ENCODE measurements at regions of chr9 and their contacts with region 1.

Region 1: DNA sequence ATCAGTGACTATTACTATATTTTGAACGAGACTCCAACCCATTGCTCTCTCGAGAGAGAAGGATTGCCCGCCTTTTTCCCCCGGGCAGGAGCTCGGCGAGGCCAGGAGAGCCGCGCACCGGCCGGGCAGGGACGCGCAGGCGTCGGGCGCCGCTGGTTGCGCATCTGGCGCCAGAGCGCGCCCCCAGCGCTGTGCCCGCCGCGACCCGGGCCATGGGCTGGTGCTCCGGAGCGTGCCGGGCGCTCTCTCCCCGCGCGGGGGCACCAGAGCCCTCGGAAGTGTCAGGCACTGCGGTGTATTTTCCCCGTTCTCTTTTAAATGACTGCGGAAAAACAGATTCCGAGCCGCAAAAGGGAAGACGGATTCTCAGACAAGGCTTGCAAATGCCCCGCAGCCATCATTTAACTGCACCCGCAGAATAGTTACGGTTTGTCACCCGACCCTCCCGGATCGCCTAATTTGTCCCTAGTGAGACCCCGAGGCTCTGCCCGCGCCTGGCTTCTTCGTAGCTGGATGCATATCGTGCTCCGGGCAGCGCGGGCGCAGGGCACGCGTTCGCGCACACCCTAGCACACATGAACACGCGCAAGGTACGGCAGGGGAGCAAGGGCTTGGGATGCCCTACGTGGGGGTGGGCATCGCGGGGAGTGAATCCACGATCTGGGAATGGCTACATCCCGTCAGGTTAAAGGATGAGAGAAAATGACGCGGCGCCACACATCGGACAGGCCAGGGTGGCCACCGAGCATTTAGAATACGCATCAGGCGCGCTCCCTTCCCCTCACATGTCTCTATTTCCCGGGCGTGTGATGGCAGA is 1.1 kb upstream of the NTRK2 start:
- DNase-seq: peak; percentile 92
- H3K4me3 ChIP-seq: peak overlapping the region; percentile 49 to 64
- H3K27ac ChIP-seq: no peak overlapping the region
- H3K4me1 ChIP-seq: peaks cover 0 to 27% of the 10 kb centered on the region in 2 experiments; a peak in 1 of 4 replicates
- H3K27me3 ChIP-seq: peaks cover 19% of the 10 kb centered on the region
- CTCF ChIP-seq: peak; percentile 67
- EP300 ChIP-seq: no peak
- RAD21 ChIP-seq: peak; percentile 81

Region 2: DNA sequence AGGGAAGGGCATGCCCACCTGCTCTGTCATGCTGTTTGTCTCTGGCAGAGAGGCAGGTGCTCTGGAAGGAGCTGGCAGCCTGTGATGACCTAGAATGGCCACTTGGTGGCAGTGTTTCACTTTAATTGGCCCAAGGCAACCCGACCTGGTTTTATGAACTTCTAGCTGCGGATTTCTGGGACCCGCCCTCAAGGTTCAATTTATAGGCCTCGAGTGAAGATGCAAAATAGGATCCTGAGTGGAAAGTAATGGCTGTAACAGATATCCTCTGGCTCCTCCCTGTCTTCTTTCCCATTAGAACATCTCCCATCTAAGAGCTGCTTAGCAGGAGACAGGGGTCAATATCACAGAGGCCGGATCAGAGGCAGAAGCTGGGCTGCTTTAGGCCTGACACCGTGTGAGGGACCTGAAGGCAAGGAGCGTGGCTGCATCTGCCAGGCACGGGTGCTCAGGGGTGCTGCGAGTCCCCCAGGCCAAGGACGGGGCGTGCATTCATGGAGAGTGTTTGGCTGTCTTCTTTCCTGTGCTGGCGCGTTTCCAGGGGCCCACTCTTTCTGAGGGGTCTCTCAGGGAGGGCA is 271.2 kb before region 1 on chr9:
- CTCF ChIA-PET with region 1: interaction called, 27 read pairs
- POLR2A ChIA-PET with region 1: no interaction called
- DNase-seq: peak; percentile 82
- H3K4me3 ChIP-seq: peak overlapping the region in 1 of 2 experiments; percentile 13; a peak in 1 of 4 replicates
- H3K27ac ChIP-seq: no peak overlapping the region
- H3K4me1 ChIP-seq: peaks cover 0 to 3% of the 10 kb centered on the region in 2 experiments; a peak in 1 of 4 replicates
- H3K27me3 ChIP-seq: no peaks in the 10 kb centered on the region
- CTCF ChIP-seq: peak; percentile 88
- EP300 ChIP-seq: no peak
- RAD21 ChIP-seq: peak; percentile 98

Region 3: DNA sequence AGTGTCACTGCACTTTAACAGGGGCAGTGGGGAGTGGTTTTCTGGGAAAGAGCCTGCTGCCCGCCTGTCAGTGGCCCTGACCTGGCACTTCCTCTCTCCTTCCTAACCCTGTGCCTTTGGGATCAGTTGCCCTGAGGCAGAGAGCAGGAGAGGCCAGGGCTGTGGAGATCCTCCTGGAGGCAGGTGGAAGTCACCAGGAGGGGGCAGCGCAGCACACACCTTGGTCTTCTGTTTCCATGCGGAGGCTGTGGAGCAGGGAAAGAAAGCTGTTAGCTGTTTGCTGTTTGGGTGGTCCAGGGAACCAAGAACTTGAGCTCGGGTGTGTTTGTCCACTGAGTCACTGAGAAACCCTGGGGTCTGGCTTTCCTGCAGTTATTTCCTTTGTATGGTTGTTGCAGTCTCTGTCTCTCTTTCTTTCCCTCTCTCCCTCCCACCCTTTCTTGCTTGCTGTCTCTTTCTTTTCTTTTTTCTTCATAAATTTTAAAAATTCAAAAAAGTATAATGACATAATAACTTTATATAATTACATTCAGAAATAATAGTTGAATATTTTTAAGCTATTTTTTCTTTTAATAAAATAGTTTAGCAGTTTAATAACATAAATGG is 29.2 kb after region 1 on chr9:
- CTCF ChIA-PET with region 1: interaction called, 19 read pairs
- POLR2A ChIA-PET with region 1: no interaction called
- DNase-seq: peak; percentile 58
- H3K4me3 ChIP-seq: no peak overlapping the region
- H3K27ac ChIP-seq: no peak overlapping the region
- H3K4me1 ChIP-seq: no peaks in the 10 kb centered on the region
- H3K27me3 ChIP-seq: no peaks in the 10 kb centered on the region; the same call in 1 of the 2 replicates
- CTCF ChIP-seq: peak; percentile 68
- EP300 ChIP-seq: no peak
- RAD21 ChIP-seq: peak; percentile 74

Region 4: DNA sequence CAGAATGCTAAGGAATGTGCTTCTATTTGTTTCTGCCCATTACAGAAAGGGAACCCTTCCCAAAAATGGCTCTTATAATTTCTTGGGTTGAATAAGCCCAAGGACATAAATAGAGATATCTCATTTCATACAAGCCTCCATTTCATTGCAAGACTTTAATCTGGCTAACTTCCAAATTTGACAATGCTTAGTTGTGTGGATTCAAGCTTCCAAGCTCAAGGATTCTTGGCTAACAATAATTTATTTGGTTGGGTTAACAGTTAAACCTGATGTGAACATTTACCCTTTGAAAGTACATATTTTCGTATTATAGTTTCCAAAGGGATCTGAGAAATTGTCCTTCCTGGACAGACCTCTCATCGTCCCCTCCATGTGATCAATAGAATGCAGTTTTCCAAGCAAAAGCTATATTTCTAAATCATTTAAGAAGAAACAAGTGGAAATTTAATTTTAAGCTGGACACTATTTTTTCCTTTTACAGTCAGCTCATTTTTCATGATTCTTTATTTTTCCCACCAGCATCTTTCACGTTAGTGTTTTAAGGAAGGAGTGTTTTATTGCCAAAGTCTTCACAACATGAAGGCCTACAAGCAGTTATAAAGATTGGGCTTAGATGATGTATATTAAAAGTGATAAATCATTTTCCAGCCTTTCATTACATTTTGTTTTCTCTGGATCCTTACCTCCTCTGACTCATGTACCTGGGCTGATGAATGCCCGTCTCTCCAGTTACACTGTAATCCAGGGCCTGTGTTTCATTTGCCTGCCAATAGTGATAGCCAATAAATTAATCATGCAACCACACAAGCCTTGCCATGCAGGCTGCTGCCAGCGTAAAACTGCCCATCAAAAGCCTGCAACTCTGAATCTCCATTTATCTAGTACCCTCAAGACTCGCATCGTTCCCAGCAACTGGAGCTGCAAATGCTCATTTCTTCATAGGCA is 177.8 kb after region 1 on chr9:
- CTCF ChIA-PET with region 1: no interaction called
- POLR2A ChIA-PET with region 1: no interaction called
- DNase-seq: no peak
- H3K4me3 ChIP-seq: no peak overlapping the region
- H3K27ac ChIP-seq: no peak overlapping the region
- H3K4me1 ChIP-seq: no peaks in the 10 kb centered on the region
- H3K27me3 ChIP-seq: 0 out of 2 replicates have a peak, but pooled peaks cover 7% of the 10 kb centered on the region
- CTCF ChIP-seq: no peak
- EP300 ChIP-seq: no peak
- RAD21 ChIP-seq: no peak

Region 5: DNA sequence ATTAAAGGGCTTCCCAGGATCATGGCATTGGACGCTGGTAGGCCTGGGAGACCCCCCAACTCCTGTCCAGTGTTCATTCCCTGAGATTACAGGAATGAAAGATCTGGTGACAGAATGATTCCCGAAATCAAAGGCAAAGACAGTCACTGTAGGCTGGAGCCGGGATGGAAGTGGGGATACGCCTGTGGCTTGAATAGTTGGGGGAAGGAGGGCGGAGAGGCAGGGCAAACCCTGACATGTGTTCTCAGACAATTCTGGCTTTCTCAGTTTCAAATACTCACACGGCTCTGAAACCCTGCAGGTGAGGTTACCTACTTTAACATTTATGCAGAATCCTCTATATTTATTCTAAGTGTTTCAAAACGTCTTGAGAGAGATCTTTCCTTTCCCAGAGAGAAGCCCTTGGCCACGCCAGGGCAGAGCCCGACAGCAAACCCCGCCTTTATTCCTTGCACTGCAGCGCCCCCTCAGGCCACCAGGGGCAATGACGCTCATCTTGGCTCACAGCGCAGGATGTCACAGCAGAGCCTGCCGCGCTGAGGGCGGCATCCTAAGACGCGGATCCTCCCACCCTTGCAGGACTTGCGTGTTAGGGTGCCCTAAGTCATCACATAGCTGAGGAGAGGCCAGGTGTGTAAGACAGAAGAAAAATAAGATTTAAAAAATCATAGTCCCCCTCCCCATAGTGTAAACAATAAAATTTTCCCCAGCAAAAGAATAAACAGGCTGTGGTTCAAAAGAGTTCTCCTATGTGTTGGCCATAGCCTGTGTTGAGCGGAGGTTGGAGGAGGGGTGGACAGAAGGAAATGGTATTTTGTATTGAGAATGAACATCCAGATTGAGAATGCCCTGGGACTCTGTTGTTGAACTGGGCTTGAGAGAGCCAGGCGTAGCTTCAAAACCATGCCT is 285.6 kb after region 1 on chr9:
- CTCF ChIA-PET with region 1: interaction called, 11 read pairs
- POLR2A ChIA-PET with region 1: no interaction called
- DNase-seq: peak; percentile 85
- H3K4me3 ChIP-seq: peak overlapping the region in 1 of 2 experiments; percentile 23; a peak in 1 of 4 replicates
- H3K27ac ChIP-seq: no peak overlapping the region
- H3K4me1 ChIP-seq: no peaks in the 10 kb centered on the region; a peak in 1 of 4 replicates
- H3K27me3 ChIP-seq: no peaks in the 10 kb centered on the region
- CTCF ChIP-seq: peak; percentile 93
- EP300 ChIP-seq: no peak
- RAD21 ChIP-seq: peak; percentile 86

Region 6: GRCh38 chr9:85004818-85005413 is 336.5 kb after region 1 on chr9:
- CTCF ChIA-PET with region 1: no interaction called
- POLR2A ChIA-PET with region 1: no interaction called
- DNase-seq: no peak
- H3K4me3 ChIP-seq: no peak overlapping the region
- H3K27ac ChIP-seq: no peak overlapping the region
- H3K4me1 ChIP-seq: no peaks in the 10 kb centered on the region
- H3K27me3 ChIP-seq: no peaks in the 10 kb centered on the region
- CTCF ChIP-seq: no peak
- EP300 ChIP-seq: no peak
- RAD21 ChIP-seq: no peak

Region 7: DNA sequence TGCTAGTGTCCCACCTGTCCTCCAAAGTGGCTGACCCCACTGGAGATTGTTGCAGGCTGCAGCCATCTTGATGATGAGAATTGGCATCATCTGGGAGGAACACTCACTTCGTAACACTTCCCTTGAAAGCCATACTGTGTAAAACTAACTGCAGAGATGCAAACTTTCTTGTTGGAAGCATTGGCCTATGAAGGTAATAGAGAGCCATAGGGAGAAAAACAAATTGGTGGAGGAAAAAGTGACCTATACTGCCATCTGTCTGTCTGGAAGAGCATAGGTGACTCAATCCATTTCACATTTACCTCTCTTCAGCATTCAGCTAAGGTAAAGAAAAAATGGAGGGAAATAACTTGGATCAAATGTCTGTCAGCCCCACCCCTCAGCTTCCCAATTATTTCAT is 474.6 kb after region 1 on chr9:
- CTCF ChIA-PET with region 1: interaction called, 13 read pairs
- POLR2A ChIA-PET with region 1: no interaction called
- DNase-seq: peak; percentile 20
- H3K4me3 ChIP-seq: no peak overlapping the region
- H3K27ac ChIP-seq: no peak overlapping the region
- H3K4me1 ChIP-seq: no peaks in the 10 kb centered on the region; a peak in 1 of 4 replicates
- H3K27me3 ChIP-seq: no peaks in the 10 kb centered on the region
- CTCF ChIP-seq: peak; percentile 54
- EP300 ChIP-seq: no peak
- RAD21 ChIP-seq: peak; percentile 72

Region 8: DNA sequence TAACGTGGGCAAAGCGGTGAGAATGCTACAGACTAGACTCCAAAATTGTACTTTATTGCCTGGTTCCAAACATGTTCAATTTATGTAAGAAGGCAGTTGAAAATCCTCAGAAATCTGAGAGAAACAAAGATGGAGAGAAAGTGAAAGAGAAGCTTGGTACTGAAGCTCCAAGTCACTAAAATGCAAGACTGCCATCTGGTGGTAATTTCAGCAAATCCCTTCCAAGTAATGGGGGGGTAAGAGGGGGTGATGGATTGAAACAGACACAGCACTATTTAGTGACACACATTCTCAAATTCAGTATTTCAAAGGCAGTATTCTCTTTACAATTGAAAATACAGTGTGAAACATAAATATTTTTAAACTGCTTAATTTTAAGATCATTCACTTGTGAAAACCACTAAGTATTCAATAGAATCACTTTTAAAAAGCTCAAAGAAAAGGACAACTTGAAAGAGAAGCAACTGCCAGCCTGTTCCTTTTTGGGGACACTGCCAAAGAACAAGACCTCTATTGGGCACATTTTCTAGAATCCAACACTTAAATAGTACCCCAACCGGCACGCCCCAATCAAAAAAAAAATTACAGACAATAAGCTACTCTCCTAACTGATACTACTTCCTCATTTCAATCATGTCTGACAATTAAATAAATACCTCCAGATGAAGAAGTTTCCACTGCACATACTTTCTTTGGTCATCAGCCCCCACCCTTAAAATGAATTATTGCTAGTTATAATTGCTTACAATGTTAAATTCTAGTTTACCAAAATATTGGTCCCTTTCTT is 941.9 kb after region 1 on chr9:
- CTCF ChIA-PET with region 1: interaction called, 27 read pairs
- POLR2A ChIA-PET with region 1: no interaction called
- DNase-seq: peak; percentile 74
- H3K4me3 ChIP-seq: peak overlapping the region in 1 of 2 experiments; percentile 18; a peak in 1 of 4 replicates
- H3K27ac ChIP-seq: peak overlapping the region; percentile 12 to 40; a peak in 1 of 4 replicates
- H3K4me1 ChIP-seq: no peaks in the 10 kb centered on the region; a peak in 1 of 4 replicates
- H3K27me3 ChIP-seq: no peaks in the 10 kb centered on the region
- CTCF ChIP-seq: peak; percentile 91
- EP300 ChIP-seq: no peak
- RAD21 ChIP-seq: peak; percentile 92